ENCODE measurements at regions of chr2 and their contacts with region 1.

Region 1: GRCh38 chr2:131801210-131801744 is 273.6 kb downstream of the CCDC74A start:
- DNase-seq: no peak
- H3K4me3 ChIP-seq: no peak overlapping the region
- H3K27ac ChIP-seq: no peak overlapping the region
- H3K4me1 ChIP-seq: peaks cover 3 to 13% of the 10 kb centered on the region in 2 donors
- H3K27me3 ChIP-seq: no peaks in the 10 kb centered on the region
- CTCF ChIP-seq: no peak
- POLR2A ChIP-seq: no peak

Region 2: GRCh38 chr2:131567891-131568290 is 233.4 kb before region 1 on chr2:
- intact Hi-C with region 1: no loop called
- DNase-seq: no peak
- H3K4me3 ChIP-seq: no peak overlapping the region
- H3K27ac ChIP-seq: no peak overlapping the region
- H3K4me1 ChIP-seq: no peaks in the 10 kb centered on the region
- H3K27me3 ChIP-seq: no peaks in the 10 kb centered on the region
- CTCF ChIP-seq: no peak
- POLR2A ChIP-seq: no peak

Region 3: GRCh38 chr2:131682122-131682944 is 118.9 kb before region 1 on chr2:
- intact Hi-C with region 1: loop called (anchors 5 to 10 kb)
- DNase-seq: peak; percentile 84 to 93 (median 86)
- H3K4me3 ChIP-seq: peak overlapping the region; percentile 5 to 86 (median 61)
- H3K27ac ChIP-seq: peak overlapping the region in 3 of 5 donors; percentile 57 to 90 (median 63)
- H3K4me1 ChIP-seq: peaks cover 3 to 17% of the 10 kb centered on the region in 2 donors
- H3K27me3 ChIP-seq: no peaks in the 10 kb centered on the region
- CTCF ChIP-seq: peak in 5 of 6 experiments; percentile 5 to 26 (median 17)
- POLR2A ChIP-seq: peak in 1 of 2 donors; percentile 30